Left ventricle myocardium superior (tissue), 1 donor: ENCODE measurements at regions of chr3 and their contacts with region 1.

Region 1: DNA sequence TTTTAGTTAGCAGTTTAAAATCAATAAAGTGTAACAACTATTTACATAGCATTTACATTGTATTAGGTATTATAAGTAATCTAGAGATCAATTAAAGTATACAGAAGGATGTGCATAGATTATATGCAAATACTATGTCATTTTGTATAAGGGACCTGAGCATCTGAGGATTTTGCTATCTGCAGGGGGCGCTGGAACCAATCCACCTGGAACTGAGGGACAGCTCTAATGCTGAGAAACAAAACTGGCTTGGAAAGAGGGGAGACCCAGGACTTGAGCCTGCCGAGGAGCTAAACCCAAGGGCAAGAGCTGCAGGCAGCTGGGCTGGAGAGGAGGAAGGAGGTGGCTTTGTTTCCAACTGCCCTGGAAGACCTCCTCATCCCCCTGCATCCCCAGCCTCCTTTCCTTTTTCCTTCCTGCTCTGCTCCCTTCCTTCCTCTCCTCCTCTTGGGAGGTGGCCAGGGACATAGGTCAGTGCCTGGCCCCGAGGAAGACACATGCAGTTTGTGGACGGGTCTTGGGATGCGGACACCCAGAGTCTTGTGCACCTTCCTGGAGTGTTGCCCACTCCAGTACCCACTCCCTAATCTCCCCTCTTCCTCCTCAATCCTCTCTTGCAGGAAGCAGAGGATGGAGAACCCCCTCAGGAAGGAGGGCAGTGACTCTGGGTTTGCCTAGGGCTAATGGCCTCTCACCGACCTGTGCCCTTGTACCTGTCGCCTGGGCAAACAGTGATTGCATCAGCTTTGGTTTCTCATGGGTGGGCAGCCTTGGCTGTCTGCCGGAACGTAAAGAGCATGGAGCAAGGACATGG is 828 bp upstream of the RTP3 start:
- DNase-seq: no peak
- ATAC-seq: no peak

Region 2: GRCh38 chr3:46017720-46018119 is 479.2 kb before region 1 on chr3:
- intact Hi-C with region 1: no loop called
- DNase-seq: no peak
- ATAC-seq: no peak

Region 3: DNA sequence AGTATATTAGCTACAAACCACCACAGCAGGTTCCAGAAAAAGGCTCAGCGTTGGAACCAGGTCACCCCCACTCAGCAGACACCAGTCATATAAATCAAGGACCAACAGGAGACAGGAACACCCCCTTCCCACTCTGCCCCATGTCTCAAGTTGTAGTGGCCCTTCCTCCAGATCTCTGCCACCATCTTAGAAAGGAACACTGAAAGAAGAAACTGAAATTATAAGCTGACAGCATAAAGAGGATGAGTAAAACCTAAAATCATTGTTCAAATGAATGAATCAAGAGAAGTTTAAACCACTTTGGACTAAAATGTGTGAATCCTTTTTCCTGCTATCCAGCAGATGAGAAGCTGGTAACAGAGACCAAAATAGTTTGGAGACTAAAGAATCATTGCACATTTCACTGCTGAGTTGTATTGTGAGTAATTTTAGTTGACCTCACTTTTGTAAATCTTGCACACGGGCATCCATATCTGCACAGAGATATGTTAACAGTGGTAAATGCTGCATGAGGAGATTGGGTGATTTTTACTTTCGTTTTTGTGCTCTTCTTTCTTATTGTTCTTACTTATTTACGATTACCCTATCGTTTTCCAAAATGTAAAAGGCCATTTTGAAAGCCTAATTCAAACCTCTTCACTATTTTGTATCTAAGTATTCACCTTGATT is 234.9 kb before region 1 on chr3:
- intact Hi-C with region 1: no loop called
- DNase-seq: no peak
- ATAC-seq: no peak

Region 4: DNA sequence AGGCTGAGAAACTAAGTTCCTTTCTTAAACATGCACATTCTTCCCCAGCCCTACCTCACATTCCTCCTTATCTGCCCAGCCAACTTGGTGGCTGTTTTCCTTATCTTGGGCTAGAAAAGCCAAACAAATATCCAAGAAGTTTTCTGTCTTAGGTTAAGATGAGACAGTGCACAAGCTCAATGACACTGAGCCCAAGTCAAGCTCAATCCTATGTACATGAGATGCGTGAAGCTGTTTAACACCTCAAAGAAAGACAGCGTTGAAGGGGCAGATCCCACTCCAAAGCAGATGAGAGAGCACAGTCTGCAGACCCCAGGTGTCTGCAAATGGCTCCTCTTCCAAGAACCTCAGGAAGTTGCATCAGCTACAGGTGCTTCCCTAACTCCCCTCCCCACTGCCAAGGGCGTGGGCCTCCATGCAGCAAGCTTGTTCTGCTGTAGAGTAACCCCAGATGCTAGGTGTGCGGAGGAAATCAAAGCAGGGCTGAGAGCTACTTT is 52.5 kb after region 1 on chr3:
- intact Hi-C with region 1: loop called (anchors 10 kb)
- DNase-seq: no peak
- ATAC-seq: no peak

Region 5: GRCh38 chr3:46663591-46664135 is 166.7 kb after region 1 on chr3:
- intact Hi-C with region 1: no loop called
- DNase-seq: peak; percentile 35
- ATAC-seq: peak; percentile 30

Region 6: GRCh38 chr3:46778101-46778500 is 281.2 kb after region 1 on chr3:
- intact Hi-C with region 1: no loop called
- DNase-seq: no peak
- ATAC-seq: no peak